ENCODE measurements at regions of chr19 and their contacts with region 1.

Region 1: DNA sequence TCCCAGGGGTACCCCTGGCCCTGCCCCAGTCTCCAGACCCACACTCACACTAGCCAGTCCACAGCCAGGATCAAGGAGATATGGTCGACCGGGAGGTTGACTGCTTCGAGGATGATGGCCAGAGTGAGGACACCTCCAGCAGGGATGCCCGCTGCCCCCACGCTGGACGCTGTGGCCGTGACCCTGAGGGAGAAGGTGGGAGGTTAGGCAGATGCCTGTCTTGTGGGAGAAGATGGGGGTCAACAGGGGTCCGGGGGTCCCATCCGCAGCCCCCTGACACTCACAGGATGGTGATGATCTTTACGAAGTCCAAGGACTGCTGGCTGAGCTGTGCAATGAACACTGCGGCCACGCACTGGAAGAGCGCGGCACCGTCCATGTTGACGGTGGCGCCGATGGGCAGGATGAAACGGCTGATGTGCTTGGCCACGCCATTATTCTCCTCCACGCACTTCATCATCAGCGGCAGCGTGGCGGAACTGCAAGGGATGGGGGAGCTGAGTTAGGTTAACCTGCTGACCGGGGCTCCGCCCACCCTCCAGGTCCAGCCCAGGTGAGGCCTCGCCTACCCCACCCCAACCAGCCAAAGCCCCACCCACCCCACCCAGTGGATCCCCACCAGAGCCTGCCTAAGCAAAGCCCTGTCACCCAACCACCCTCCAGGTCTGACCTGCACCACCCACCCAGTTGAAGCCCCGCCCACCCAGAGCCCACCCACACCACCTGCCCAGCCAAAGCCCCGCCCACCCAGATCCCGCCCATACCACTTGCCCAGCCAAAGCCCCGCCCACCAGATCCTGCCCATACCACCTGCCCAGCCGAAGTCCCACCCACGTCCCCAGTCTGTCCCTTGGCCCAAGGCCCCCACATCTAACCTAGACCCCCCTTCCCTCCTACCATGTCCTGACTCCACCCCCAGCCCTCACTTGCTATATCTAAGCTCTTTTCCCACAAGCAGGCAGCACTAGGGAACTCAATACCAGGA is 11.2 kb downstream of the SLC1A5 start:
- DNase-seq: no peak
- H3K4me3 ChIP-seq: no peak overlapping the region
- H3K27ac ChIP-seq: no peak overlapping the region
- H3K27me3 ChIP-seq: peaks cover 0 to 9% (median 0%) of the 10 kb centered on the region in 45 donors
- CTCF ChIP-seq: no peak

Region 2: GRCh38 chr19:46834121-46834520 is 56.9 kb after region 1 on chr19:
- intact Hi-C with region 1: loop called in 1 of 2 experiments (anchors 5 kb)
- DNase-seq: no peak
- H3K4me3 ChIP-seq: no peak overlapping the region
- H3K27ac ChIP-seq: no peak overlapping the region
- H3K27me3 ChIP-seq: no peaks in the 10 kb centered on the region
- CTCF ChIP-seq: no peak

Measured in dorsolateral prefrontal cortex (tissue), 120 donors.